Activated CD8-positive, alpha-beta memory T cell treated with anti-CD3 and anti-CD28 coated beads, Interleukin-2, amount 10 ng/mL, durations not matched to agents 7 days and 5 days (primary cell): ENCODE measurements at regions of chr3 and their contacts with region 1.

Region 1: DNA sequence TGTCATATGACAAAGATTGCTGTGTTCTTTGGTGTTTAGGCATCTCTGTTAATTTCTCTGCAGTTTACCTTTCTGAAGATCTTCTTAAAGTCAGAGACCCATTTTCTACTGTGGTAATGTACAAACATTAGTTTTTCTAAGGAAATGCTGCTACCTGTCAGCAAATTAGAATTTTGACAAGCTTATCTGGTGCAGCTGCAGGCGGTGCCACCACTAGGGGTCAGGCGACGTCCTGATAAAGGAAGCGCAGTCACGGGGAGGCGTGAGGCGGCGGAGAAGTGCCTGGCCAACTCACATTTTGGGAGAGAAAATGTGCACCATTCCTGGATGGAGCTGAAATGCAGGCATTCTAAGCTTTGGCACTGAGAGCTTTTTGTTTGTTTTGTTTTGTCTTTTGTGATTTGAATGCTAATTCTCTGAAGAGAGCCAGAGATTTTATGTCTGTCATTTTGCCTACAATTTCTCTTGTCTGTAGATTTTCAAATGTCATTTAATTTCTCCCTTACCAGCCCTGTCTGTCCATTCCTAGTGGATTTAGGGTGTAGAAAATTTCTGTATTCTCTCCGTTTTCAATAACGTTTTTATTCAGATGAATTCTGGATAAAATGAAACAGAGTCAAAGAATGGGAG is 24.9 kb upstream of the SIAH2 start:
- DNase-seq: peak; percentile 88
- ATAC-seq: peak; percentile 70
- H3K4me3 Mint-ChIP-seq: no peak overlapping the region
- H3K27ac Mint-ChIP-seq: no peak overlapping the region
- H3K4me1 Mint-ChIP-seq: peaks cover 42% of the 10 kb centered on the region
- H3K27me3 Mint-ChIP-seq: no peaks in the 10 kb centered on the region

Region 2: DNA sequence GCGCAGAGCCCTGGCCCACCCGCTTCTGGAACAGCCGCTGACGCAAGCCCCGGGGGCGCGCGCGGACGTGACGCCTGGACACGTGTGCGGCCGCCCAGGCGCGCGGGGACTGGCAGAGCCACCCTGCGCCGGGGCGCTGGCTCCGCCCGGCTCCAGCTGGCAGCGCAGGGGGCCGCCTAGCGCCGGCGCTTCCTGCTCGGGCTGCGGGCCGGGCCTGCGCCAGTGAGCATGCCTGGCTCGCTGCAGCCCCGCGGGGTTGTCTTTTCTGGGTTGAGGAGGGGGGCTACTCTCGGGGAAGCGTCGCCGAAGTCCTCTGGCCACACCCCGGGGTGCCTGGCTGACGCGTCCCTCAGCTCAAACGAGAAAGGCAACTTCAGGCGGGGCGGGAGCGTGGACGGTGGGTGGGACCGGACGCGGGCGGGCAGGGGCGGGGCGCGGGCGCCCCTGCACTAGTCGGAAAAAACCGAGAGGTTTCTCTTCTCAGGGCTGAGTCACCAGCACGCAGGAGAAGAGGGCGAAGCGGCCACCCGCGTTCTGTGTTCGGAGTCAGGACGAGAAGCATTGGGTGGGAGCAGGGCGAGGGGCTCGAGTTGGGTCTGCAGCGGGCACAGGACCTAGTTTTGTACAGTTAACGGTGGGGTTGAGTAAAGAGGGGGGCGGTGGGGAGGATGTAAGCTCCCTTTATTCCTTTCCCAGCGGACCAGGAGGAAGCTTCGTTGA is 24.6 kb before region 1 on chr3 and contains the start of gene SIAH2:
- CTCF ChIA-PET with region 1: interaction called, 23 read pairs
- DNase-seq: peak; percentile 95
- ATAC-seq: peak; percentile 79
- H3K4me3 Mint-ChIP-seq: peak within 1 kb of the TSS; percentile 91
- H3K27ac Mint-ChIP-seq: peak within 1 kb of the TSS; percentile 100
- H3K4me1 Mint-ChIP-seq: peaks cover 40% of the 10 kb centered on the region
- H3K27me3 Mint-ChIP-seq: no peaks in the 10 kb centered on the region
- total RNA-seq, gene SIAH2: 34.7 to 54.2 TPM

Region 3: GRCh38 chr3:150798122-150798626 is 10.3 kb after region 1 on chr3:
- CTCF ChIA-PET with region 1: interaction called, 11 read pairs
- DNase-seq: no peak
- ATAC-seq: no peak
- H3K4me3 Mint-ChIP-seq: no peak overlapping the region
- H3K27ac Mint-ChIP-seq: no peak overlapping the region
- H3K4me1 Mint-ChIP-seq: peaks cover 9% of the 10 kb centered on the region
- H3K27me3 Mint-ChIP-seq: peaks cover 7% of the 10 kb centered on the region

Region 4: GRCh38 chr3:150870396-150870795 is 82.5 kb after region 1 on chr3:
- CTCF ChIA-PET with region 1: interaction called, 19 read pairs
- DNase-seq: no peak
- ATAC-seq: no peak
- H3K4me3 Mint-ChIP-seq: no peak overlapping the region
- H3K27ac Mint-ChIP-seq: no peak overlapping the region
- H3K4me1 Mint-ChIP-seq: peaks cover 14% of the 10 kb centered on the region
- H3K27me3 Mint-ChIP-seq: peaks cover 13% of the 10 kb centered on the region